Right ventricle myocardium inferior (tissue), 1 donor: ENCODE measurements at regions of chr1 and their contacts with region 1.

Region 1: GRCh38 chr1:178037503-178038253 is 56.2 kb upstream of the RASAL2 start:
- DNase-seq: peak; percentile 94
- ATAC-seq: peak; percentile 97

Region 2: GRCh38 chr1:177880339-177880891 is 157.3 kb before region 1 on chr1:
- intact Hi-C with region 1: no loop called
- DNase-seq: no peak
- ATAC-seq: no peak

Region 3: DNA sequence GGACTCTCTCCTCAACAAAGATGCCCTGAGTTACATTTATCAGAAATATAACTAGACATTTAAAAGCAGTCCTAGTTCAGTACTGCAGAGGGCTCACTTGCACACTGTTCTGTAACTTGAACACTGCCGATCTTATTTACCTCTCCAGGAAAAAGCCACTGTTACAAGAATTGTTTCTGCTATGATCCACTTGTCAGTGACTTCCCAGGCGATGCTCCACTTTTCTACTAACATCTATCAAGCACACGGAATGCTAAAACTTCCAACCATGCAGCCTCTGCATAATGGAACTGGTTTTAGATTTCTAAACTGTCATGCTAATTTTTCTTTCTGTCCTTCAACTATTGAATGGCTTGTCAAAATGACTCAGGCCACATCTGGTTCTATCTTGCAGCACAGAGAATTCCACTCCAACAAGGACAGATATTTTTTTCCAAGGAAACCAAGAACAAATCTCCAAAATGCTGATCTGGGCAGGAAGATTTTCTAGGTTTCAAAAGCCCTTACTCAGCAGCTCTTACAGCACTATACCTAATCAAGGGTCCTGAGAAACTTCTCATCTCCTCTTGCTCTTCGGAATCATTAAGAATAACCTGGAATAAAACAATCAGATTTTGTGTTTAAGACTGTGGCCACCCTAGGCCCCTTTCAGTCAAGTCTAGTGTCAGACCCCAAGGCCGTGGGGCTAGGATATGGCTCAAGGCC is 77.7 kb before region 1 on chr1:
- intact Hi-C with region 1: no loop called
- DNase-seq: no peak
- ATAC-seq: peak; percentile 50

Region 4: GRCh38 chr1:178055779-178056471 is 18.2 kb after region 1 on chr1:
- intact Hi-C with region 1: loop called (anchors 1 kb)
- DNase-seq: no peak
- ATAC-seq: peak; percentile 59